ENCODE measurements at regions of chr2 and their contacts with region 1.

Region 1: DNA sequence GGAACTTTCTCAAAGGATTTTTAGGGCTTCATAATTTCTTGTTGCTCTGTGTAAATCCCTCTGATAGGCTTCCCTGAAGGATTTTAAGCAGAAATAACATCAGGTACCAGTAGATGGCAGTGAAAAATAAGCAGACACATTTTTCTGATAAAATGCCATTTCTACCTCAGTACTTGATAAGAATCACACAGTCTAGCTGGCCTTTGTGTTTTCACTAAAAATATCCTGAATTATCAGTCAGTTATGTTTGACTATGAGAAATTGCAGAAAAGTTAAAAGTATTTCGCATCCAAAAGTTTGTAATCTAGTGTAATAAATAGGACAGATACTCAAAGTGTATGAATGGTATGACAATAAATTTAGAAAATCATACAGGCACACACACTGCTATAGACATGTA is 68.7 kb downstream of the DNAJC10 start:
- DNase-seq: peak; percentile 84
- H3K4me3 ChIP-seq: no peak overlapping the region
- H3K27ac ChIP-seq: no peak overlapping the region
- H3K4me1 ChIP-seq: peaks cover 13% of the 10 kb centered on the region
- H3K27me3 ChIP-seq: no peaks in the 10 kb centered on the region
- CTCF ChIP-seq: peak; percentile 75

Region 2: DNA sequence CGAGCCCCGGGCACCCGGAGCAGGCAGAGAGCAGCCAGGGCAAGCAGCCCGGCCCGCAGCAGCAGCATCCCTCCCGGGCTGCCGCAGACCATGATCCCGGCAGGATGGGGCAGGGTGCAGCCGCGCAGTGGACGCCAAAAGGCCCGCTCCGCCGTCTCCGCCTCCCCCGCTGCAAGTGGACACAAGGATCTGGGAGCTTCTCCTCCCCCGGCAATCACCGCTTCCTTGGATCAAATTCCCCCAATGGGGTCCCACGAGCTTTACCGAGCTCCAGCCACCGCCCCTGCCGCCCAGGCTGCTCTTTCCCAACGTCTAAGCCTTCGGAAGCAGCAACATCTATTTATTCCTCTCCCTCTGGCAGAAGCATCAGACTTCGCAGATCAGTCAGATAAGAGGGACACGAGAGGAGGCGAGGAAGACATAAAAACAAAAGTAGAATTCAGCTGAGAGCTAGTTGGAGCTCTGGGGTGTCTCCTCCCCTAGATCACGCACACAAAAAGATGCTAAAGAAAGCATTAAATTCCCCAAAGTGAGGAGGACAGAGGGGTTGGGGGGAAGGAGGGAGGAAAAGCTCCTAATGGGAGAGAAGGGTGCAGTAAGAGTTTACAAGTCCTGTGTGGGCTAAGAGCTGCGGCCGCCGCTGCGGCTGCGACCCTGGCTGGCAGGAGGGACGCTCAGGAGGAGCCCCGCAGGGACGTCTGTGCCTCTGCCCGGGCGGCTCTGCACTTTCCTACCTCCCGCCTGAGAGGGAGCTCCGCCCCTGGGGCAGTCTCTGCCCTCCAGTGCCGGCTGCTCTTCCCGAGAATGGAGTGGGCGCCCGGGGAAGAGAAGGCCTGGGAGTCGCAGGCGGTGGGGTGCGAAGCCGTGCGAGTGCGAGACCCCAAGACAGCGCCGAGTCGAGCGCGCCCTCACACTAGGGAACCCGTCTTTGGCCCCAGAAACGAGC is 82.0 kb after region 1 on chr2 and contains the start of gene FRZB:
- CTCF ChIA-PET with region 1: no interaction called
- POLR2A ChIA-PET with region 1: no interaction called
- intact Hi-C with region 1: loop called (anchors 5 kb)
- DNase-seq: peak; percentile 69
- H3K4me3 ChIP-seq: peak within 1 kb of the TSS; percentile 50
- H3K27ac ChIP-seq: peak within 1 kb of the TSS; percentile 49
- H3K4me1 ChIP-seq: peaks cover 21% of the 10 kb centered on the region
- H3K27me3 ChIP-seq: no peaks in the 10 kb centered on the region
- CTCF ChIP-seq: no peak
- total RNA-seq, gene FRZB: 1.8 and 3.6 TPM in 2 replicates

Region 3: DNA sequence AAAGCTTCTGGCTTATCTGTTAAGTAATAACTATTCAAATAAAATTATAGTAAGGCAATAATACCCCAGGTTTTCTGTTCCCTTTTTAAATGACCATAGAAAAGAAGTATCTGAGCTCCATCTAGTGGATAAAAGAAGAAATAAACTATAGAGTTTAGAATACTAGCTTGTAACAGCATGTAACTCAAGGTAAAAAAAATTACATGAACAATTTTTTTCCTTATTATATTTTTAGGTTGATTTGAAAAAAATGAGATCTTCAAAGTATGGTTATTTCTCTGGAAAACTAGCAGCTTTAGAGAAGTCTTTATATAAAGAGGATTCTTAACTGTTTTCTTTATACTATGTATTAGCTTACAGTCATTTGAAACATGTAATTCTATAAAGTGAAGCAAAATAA is 195.3 kb after region 1 on chr2:
- CTCF ChIA-PET with region 1: interaction called, 6 read pairs
- POLR2A ChIA-PET with region 1: no interaction called
- intact Hi-C with region 1: loop called (anchors 1 kb)
- DNase-seq: peak; percentile 81
- H3K4me3 ChIP-seq: no peak overlapping the region
- H3K27ac ChIP-seq: no peak overlapping the region
- H3K4me1 ChIP-seq: peaks cover 26% of the 10 kb centered on the region
- H3K27me3 ChIP-seq: no peaks in the 10 kb centered on the region
- CTCF ChIP-seq: peak; percentile 69

Region 4: GRCh38 chr2:183359867-183360266 is 575.1 kb after region 1 on chr2:
- CTCF ChIA-PET with region 1: no interaction called
- POLR2A ChIA-PET with region 1: no interaction called
- intact Hi-C with region 1: loop called (anchors 10 kb)
- DNase-seq: peak; percentile 29
- H3K4me3 ChIP-seq: no peak overlapping the region
- H3K27ac ChIP-seq: no peak overlapping the region
- H3K4me1 ChIP-seq: no peaks in the 10 kb centered on the region
- H3K27me3 ChIP-seq: no peaks in the 10 kb centered on the region
- CTCF ChIP-seq: peak; percentile 49